Ovary (tissue), 10 donors: ENCODE measurements at regions of chr4 and their contacts with region 1.

Region 1: GRCh38 chr4:176400816-176401461 is 81.2 kb downstream of the SPCS3 start:
- DNase-seq: no peak
- H3K4me3 ChIP-seq: no peak overlapping the region
- H3K27ac ChIP-seq: no peak overlapping the region
- H3K4me1 ChIP-seq: no peaks in the 10 kb centered on the region
- H3K27me3 ChIP-seq: no peaks in the 10 kb centered on the region
- CTCF ChIP-seq: no peak
- EP300 ChIP-seq: no peak
- POLR2A ChIP-seq: no peak

Region 2: GRCh38 chr4:176207839-176208238 is 193.1 kb before region 1 on chr4:
- intact Hi-C with region 1: no loop called
- DNase-seq: no peak
- H3K4me3 ChIP-seq: no peak overlapping the region
- H3K27ac ChIP-seq: no peak overlapping the region
- H3K4me1 ChIP-seq: no peaks in the 10 kb centered on the region
- H3K27me3 ChIP-seq: no peaks in the 10 kb centered on the region
- CTCF ChIP-seq: no peak
- EP300 ChIP-seq: no peak
- POLR2A ChIP-seq: no peak

Region 3: GRCh38 chr4:176413171-176413570 is 12.2 kb after region 1 on chr4:
- intact Hi-C with region 1: loop called in 1 of 4 experiments (anchors 2 kb)
- DNase-seq: no peak
- H3K4me3 ChIP-seq: no peak overlapping the region
- H3K27ac ChIP-seq: no peak overlapping the region
- H3K4me1 ChIP-seq: no peaks in the 10 kb centered on the region
- H3K27me3 ChIP-seq: no peaks in the 10 kb centered on the region
- CTCF ChIP-seq: no peak
- EP300 ChIP-seq: no peak
- POLR2A ChIP-seq: no peak